Mammary epithelial cell (primary cell): ENCODE measurements at regions of chr6 and their contacts with region 1.

Region 1: DNA sequence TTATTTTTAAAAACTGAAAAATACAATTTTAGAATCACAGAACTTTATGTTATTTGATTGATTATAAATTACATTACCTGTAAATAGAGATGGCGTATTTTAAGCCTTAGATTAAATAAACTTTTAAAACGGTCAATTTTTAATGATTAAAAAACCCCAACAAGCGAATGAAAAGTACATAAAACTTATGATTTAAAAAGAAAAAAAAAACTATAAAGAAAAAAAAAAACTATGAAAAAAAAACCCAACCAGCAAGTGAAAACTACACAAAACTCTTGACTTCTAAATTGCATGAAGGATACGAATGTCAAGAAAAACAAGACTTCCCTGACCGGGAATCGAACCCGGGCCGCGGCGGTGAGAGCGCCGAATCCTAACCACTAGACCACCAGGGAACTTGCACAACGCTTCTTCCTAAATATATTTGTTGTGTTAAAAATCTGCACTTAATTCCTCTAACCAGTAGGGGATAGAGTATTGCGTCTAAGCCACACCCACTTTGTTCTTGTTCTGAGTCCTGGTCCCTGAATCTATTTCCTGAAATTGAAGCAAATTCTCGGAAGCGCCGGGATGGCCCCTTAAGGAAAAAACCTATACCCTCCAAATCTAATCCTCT is 10.7 kb upstream of the NCOA7 start:
- DNase-seq: peak; percentile 86
- H3K4me3 ChIP-seq: peak overlapping the region; percentile 69 to 98 (median 85)
- H3K27ac ChIP-seq: peak overlapping the region; percentile 95
- H3K4me1 ChIP-seq: peaks cover 4% of the 10 kb centered on the region
- H3K27me3 ChIP-seq: peaks cover 2% of the 10 kb centered on the region
- CTCF ChIP-seq: peak in 1 of 2 donors; percentile 38

Region 2: DNA sequence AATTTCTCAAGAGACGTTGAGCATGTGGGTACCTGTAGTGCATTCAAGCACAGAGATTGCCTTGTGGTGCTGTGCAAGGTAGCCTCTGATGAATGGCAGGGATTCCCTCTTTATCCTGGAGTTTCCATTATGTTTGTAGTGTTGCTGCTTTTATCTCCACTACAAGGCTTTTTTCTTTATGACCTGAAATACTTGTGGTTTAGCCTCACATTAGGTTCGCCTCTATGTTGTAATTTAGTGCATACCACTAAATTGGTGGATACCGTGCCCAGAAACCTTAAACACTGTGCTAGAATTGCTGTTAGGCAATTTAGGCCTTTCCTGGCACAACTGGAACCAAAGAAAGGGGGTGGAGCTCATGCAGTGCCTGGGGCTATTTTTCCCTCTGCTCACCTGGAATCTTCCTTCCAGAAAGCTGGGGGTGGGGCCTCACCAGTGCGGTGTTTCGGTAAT is 87.5 kb after region 1 on chr6:
- CTCF ChIA-PET with region 1: no interaction called
- dilution Hi-C with region 1: no loop called
- in situ Hi-C with region 1: no loop called
- intact Hi-C with region 1: loop called (anchors 2 kb)
- DNase-seq: peak; percentile 99
- H3K4me3 ChIP-seq: peak overlapping the region in 1 of 3 experiments; percentile 21
- H3K27ac ChIP-seq: peak overlapping the region; percentile 90
- H3K4me1 ChIP-seq: peaks cover 26% of the 10 kb centered on the region
- H3K27me3 ChIP-seq: no peaks in the 10 kb centered on the region
- CTCF ChIP-seq: no peak

Region 3: GRCh38 chr6:125918681-125919566 is 138.9 kb after region 1 on chr6:
- CTCF ChIA-PET with region 1: no interaction called
- dilution Hi-C with region 1: no loop called
- in situ Hi-C with region 1: no loop called
- intact Hi-C with region 1: loop called (anchors 1 kb)
- DNase-seq: peak; percentile 96
- H3K4me3 ChIP-seq: peak overlapping the region; percentile 37 to 52 (median 51)
- H3K27ac ChIP-seq: peak overlapping the region; percentile 97
- H3K4me1 ChIP-seq: peaks cover 26% of the 10 kb centered on the region
- H3K27me3 ChIP-seq: no peaks in the 10 kb centered on the region
- CTCF ChIP-seq: no peak